Adrenal gland (tissue), 19 donors: ENCODE measurements at regions of chr5 and their contacts with region 1.

Region 1: DNA sequence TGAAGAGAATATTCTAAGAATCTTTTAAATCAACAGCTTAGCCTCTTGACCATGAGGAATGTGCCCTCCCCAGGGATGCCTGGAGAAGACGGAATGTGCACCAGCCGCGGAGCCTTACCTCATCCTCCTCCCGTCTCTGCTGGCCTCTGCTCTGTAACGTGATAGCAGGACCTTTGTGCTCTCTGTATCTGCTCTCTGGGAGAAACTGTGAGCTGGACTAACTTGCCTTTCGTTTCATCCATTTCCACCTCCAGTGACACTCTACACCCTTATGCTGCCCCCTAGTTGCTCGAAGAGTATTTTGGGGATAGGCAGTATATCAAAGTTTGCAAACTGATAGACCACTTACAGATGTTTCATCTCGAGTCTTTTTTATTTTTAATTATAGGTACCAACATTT is 141.4 kb downstream of the NPR3 start:
- DNase-seq: peak; percentile 30 to 54 (median 43)
- H3K4me3 ChIP-seq: no peak overlapping the region
- H3K27ac ChIP-seq: no peak overlapping the region
- H3K4me1 ChIP-seq: peaks cover 0 to 6% of the 10 kb centered on the region in 2 donors
- H3K27me3 ChIP-seq: no peaks in the 10 kb centered on the region
- CTCF ChIP-seq: peak; percentile 47 to 68 (median 54)
- POLR2A ChIP-seq: no peak

Region 2: GRCh38 chr5:33299621-33300208 is 447.2 kb after region 1 on chr5:
- intact Hi-C with region 1: loop called in 1 of 2 experiments (anchors 5 kb)
- DNase-seq: peak in 4 of 7 donors; percentile 25 to 58 (median 28)
- H3K4me3 ChIP-seq: peak overlapping the region in 1 of 4 donors; percentile 16
- H3K27ac ChIP-seq: peak overlapping the region in 2 of 5 donors; percentile 6 to 21
- H3K4me1 ChIP-seq: peaks cover 0 to 17% of the 10 kb centered on the region in 2 donors
- H3K27me3 ChIP-seq: no peaks in the 10 kb centered on the region
- CTCF ChIP-seq: peak in 5 of 6 experiments; percentile 50 to 69 (median 56)
- POLR2A ChIP-seq: no peak